ENCODE measurements at regions of chr10 and their contacts with region 1.

Region 1: DNA sequence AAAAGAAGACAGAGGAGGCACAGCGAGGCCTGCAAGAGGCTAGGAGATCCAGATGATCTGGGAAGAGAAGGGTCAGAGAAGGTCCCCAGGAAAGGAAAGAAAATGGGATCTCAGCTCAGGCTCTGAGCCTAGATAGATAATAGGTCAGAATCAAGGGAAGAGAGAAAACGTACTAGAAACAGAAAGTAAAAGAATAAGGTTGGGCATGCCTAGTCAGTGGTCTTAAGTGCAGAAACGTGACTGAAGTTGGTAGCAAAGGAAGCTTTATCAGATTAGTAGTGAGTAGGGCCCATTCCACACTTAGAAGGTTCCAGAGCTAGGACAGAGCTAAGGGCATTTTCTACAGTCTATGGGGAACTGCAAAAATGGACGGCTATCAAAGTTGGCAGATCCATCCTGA is 84.8 kb upstream of the ASAH2 start:
- DNase-seq: no peak
- ATAC-seq: no peak
- H3K4me3 ChIP-seq: no peak overlapping the region
- H3K27ac ChIP-seq: no peak overlapping the region
- H3K4me1 ChIP-seq: no peaks in the 10 kb centered on the region
- H3K27me3 ChIP-seq: no peaks in the 10 kb centered on the region
- CTCF ChIP-seq: no peak

Region 2: DNA sequence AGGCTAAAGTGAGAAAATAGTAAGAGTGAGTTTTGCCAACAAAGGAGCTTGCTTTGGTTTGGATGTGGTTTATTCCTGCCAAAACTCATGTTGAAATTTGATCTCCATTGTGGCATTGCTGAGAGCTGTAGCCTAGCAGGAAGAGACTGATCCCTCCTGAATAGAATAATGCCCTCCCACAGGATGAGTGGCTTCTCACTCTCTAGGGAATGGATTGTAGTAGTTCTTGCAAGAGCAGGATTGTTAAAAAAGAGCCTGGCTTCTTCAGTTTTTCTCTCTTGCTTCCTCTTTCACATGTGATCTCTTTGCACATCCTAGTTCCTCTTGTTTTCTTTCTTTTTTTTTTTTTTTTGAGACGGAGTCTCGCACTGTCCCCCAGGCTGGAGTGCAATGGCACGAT is 119.2 kb before region 1 on chr10:
- intact Hi-C with region 1: no loop called
- DNase-seq: no peak
- ATAC-seq: no peak
- H3K4me3 ChIP-seq: no peak overlapping the region
- H3K27ac ChIP-seq: no peak overlapping the region
- H3K4me1 ChIP-seq: no peaks in the 10 kb centered on the region
- H3K27me3 ChIP-seq: no peaks in the 10 kb centered on the region
- CTCF ChIP-seq: no peak

Region 3: DNA sequence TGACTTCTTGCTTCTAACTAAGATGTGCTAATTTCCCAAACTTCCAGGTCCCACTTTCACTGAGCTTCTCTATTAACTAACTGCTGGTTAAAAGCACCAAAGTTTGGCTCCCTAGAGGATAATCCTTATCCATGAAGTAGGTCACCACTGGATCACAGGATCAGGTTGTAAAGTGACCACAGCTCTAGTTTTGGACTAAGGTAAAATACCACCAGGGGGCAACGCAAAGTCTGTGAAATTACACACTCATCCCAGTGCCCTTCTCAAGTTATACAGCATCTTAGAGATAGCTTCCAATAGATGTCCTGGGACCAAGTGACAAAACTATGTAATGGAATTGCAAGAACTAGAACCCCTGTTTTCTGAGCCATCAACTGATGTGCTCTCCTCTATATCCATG is 31.6 kb after region 1 on chr10:
- intact Hi-C with region 1: loop called in 1 of 2 experiments (anchors 5 kb)
- DNase-seq: no peak
- ATAC-seq: no peak
- H3K4me3 ChIP-seq: no peak overlapping the region
- H3K27ac ChIP-seq: no peak overlapping the region
- H3K4me1 ChIP-seq: peaks cover 15% of the 10 kb centered on the region
- H3K27me3 ChIP-seq: no peaks in the 10 kb centered on the region
- CTCF ChIP-seq: peak; percentile 18

Region 4: GRCh38 chr10:50375051-50375452 is 38.9 kb after region 1 on chr10:
- intact Hi-C with region 1: loop called in 1 of 2 experiments (anchors 5 kb)
- DNase-seq: no peak
- ATAC-seq: no peak
- H3K4me3 ChIP-seq: no peak overlapping the region
- H3K27ac ChIP-seq: peak overlapping the region; percentile 75
- H3K4me1 ChIP-seq: peaks cover 39% of the 10 kb centered on the region
- H3K27me3 ChIP-seq: no peaks in the 10 kb centered on the region
- CTCF ChIP-seq: no peak